HCT116 (cell line): ENCODE measurements at regions of chr10 and their contacts with region 1.

Region 1: DNA sequence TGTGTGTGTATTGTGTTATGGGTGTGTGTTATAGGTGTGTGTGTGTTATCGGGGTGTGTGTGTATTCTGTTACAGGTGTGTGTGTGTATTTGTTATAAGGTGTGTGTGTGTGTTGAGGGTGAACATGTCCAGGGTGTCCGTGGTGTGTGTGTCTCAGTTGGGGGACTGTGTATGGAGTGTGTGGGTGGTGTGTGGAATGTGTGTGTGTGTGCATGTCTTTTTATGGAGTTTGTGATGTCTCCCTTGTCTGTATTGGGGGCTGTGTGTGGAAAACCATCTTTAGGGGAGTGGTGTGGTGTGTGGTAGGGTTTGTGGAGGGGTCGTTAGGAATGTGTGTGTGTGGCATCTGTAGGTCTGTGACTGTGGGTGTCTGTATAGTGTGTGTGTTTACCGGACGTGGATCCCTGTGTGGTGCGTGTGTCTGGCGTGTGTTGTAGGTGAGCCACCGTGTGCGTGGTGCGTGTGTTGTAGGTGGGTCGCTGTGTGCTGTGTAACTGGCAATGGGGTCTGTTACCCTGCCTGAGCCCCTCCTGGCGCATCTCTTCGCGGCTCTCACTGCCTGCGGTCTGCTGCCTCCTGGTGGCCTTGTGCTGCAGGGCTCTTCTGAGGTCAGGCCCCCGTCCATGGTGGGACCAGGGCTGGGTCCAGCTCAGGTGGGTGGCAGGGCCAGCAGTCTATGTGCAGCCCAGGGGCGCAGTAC is 61.7 kb downstream of the PALD1 start:
- DNase-seq: no peak
- ATAC-seq: peak; percentile 53
- H3K4me3 ChIP-seq: no peak overlapping the region
- H3K27ac ChIP-seq: no peak overlapping the region
- H3K4me1 ChIP-seq: peaks cover 3 to 11% of the 10 kb centered on the region in 2 experiments; a peak in 2 of 4 replicates
- H3K27me3 ChIP-seq: no peaks in the 10 kb centered on the region
- CTCF ChIP-seq: peak; percentile 48 to 78 (median 73); a peak in 5 of 6 replicates
- POLR2A ChIP-seq: no peak
- RAD21 ChIP-seq: peak; percentile 80

Region 2: DNA sequence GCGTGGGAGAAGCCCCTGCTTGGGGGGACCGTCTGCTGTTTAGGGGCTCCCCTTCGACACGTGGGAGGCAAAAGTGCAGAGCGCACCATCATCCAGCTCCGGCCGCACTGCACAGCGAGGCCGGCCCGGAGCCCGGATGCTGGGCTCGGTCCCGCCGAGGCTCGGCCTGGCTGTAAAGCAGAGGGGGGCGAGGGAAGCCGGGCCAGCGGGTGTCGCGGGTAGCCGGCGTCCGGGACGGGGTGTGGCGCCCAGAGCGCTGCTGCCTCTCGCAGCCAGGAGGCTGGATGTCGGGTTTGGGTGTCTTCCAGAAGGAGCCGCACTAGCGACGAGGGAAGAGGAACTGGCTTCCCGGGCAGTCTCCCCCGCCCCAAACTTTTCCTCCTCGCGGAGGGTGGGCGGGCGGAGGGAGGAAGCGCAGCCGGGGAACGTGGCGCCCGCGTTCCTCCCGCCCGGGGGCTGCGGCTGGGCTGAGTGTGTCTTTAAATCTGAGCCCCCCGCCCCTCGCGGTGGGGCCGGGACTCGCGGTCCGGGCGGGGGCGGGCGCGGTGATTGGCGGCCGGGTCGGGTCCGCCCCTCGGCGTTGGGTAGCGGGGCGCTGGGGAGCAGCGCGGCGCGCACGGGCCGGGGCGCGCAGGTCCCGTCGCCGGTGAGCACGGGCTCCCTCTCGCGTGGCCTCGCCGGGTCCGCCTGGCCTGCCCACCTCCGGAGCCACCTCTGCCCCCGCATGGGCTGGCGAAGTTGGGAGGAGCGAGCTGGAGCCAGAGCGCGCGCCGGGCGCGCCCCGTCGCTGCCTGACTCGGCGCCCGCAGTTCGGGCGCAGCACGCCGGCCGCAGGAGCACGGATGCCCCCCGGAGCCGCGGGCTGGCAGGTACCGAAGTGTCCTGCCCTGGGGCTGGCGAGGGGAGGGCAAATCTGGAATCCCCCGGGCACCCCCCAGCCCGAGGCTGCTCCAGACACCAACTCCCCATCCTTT is 61.8 kb before region 1 on chr10 and contains the start of gene PALD1:
- CTCF ChIA-PET with region 1: no interaction called
- POLR2A ChIA-PET with region 1: no interaction called
- RAD21 ChIA-PET with region 1: no interaction called
- intact Hi-C with region 1: loop called (anchors 5 kb)
- DNase-seq: peak; percentile 48
- ATAC-seq: peak; percentile 77
- H3K4me3 ChIP-seq: peak within 1 kb of the TSS; percentile 80 to 97
- H3K27ac ChIP-seq: peak within 1 kb of the TSS; percentile 95
- H3K4me1 ChIP-seq: peaks cover 26 to 61% of the 10 kb centered on the region in 2 experiments
- H3K27me3 ChIP-seq: no peaks in the 10 kb centered on the region
- CTCF ChIP-seq: peak in 1 of 3 experiments; percentile 32; a peak in 2 of 6 replicates
- POLR2A ChIP-seq: peak; percentile 61
- RAD21 ChIP-seq: no peak
- total RNA-seq, gene PALD1: 33.1 TPM